ENCODE measurements at regions of chr7 and their contacts with region 1.

Region 1: GRCh38 chr7:116236020-116236630 is 25.8 kb downstream of the TES start:
- DNase-seq: no peak
- ATAC-seq: peak; percentile 77
- H3K4me3 ChIP-seq: no peak overlapping the region
- H3K27ac ChIP-seq: no peak overlapping the region
- H3K4me1 ChIP-seq: peaks cover 27% of the 10 kb centered on the region
- H3K27me3 ChIP-seq: no peaks in the 10 kb centered on the region
- CTCF ChIP-seq: peak; percentile 62

Region 2: GRCh38 chr7:116128139-116128538 is 108.0 kb before region 1 on chr7:
- intact Hi-C with region 1: no loop called
- DNase-seq: no peak
- ATAC-seq: no peak
- H3K4me3 ChIP-seq: no peak overlapping the region
- H3K27ac ChIP-seq: no peak overlapping the region
- H3K4me1 ChIP-seq: no peaks in the 10 kb centered on the region
- H3K27me3 ChIP-seq: no peaks in the 10 kb centered on the region
- CTCF ChIP-seq: no peak

Region 3: GRCh38 chr7:116177009-116177408 is 59.1 kb before region 1 on chr7:
- intact Hi-C with region 1: loop called (anchors 5 kb)
- DNase-seq: no peak
- ATAC-seq: no peak
- H3K4me3 ChIP-seq: no peak overlapping the region
- H3K27ac ChIP-seq: no peak overlapping the region
- H3K4me1 ChIP-seq: no peaks in the 10 kb centered on the region
- H3K27me3 ChIP-seq: no peaks in the 10 kb centered on the region
- CTCF ChIP-seq: no peak

Region 4: DNA sequence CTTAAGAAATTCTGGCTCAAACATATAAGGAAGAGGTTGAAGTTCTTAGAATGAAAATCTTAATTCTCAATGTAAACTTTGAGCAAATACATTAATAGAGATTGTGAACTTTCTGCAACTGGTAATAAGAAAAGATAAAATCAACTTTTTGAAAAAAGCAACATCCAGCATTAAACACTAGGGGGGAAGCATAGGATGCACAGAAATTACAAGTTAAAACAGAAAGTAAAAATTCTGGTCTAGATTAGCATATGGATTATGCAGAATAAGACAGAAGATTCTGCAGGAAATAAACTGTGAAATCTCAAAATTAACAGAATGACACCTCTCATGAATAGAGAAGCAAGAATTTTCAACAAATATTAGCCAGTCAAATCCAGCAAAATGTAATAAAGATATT is 225.4 kb after region 1 on chr7:
- intact Hi-C with region 1: no loop called
- DNase-seq: no peak
- ATAC-seq: no peak
- H3K4me3 ChIP-seq: no peak overlapping the region
- H3K27ac ChIP-seq: no peak overlapping the region
- H3K4me1 ChIP-seq: no peaks in the 10 kb centered on the region
- H3K27me3 ChIP-seq: no peaks in the 10 kb centered on the region
- CTCF ChIP-seq: no peak

Measured in upper lobe of right lung (tissue), 1 donor.